Activated T-helper 1 cell treated with anti-CD3 and anti-CD28 coated beads, Interleukin-12 subunit alpha, Interleukin-12 subunit beta, Interleukin-2, Interleukin-4 antibody, amounts not matched to agents 30 ng/mL and 10 ng/mL and 1 ng/mL, durations not matched to agents 14 hours and 24 hours and 36 hours (primary cell): ENCODE measurements at regions of chr2 and their contacts with region 1.

Region 1: DNA sequence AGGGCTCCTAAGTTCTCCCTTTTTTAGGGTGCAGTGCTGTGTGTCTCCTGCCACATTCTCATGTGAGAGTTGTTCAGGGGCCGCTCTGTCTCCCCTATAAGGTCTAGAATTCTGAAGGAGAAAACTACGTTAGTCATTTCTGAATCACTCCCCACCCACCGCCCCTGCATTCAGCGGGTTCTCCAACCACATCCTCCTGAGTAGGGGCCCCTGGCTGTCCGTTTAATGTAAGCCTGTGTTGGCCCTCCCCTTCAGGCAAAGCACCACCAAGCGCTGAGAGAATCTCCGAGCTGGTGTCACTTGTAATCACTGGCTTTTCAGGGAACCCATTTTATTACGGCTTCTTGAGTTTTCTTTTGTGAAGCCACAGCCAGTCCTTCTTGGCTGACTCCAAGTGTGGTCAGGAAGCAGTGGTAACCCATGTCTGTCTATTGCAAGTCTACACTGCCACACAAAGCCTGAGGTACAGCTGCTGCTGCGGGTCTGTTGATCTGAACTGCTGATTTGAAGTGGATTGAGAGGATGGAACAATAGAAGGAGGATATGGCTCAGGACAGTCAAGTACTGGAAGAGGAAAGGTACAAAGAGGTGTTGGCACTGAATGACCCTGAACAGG is 16.9 kb downstream of the LCT start:
- DNase-seq: peak; percentile 75
- H3K4me3 Mint-ChIP-seq: peak overlapping the region; percentile 80
- H3K27ac Mint-ChIP-seq: peak overlapping the region; percentile 89
- H3K4me1 Mint-ChIP-seq: peaks cover 52% of the 10 kb centered on the region
- H3K27me3 Mint-ChIP-seq: no peaks in the 10 kb centered on the region

Region 2: GRCh38 chr2:135741395-135742324 is 78.5 kb before region 1 on chr2 and contains the start of gene UBXN4:
- intact Hi-C with region 1: loop called (anchors 1 kb)
- DNase-seq: peak; percentile 89
- H3K4me3 Mint-ChIP-seq: peak within 1 kb of the TSS; percentile 99
- H3K27ac Mint-ChIP-seq: peak within 1 kb of the TSS; percentile 100
- H3K4me1 Mint-ChIP-seq: peaks cover 36% of the 10 kb centered on the region
- H3K27me3 Mint-ChIP-seq: no peaks in the 10 kb centered on the region
- total RNA-seq, gene UBXN4: 115 and 121 TPM in 2 replicates

Region 3: DNA sequence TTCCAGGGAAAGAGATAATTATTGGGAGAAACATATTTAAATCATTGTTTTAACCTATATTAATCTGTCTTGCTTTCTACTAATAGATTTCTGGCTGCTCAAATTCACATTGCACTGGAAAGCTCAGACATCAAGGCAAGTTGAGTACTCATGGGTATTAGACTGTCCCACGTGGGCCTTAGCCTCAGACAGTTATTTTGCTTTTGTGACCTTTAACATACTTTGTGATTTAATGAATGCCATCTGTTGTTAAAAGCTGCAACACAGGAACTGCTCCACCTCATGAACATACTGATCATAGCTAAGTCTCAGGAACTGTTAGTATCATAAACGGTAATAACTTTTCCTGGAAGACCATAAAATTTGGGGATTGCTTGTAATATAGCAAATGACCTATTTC is 19.6 kb after region 1 on chr2:
- intact Hi-C with region 1: loop called (anchors 2 kb)
- DNase-seq: no peak
- H3K4me3 Mint-ChIP-seq: no peak overlapping the region
- H3K27ac Mint-ChIP-seq: no peak overlapping the region
- H3K4me1 Mint-ChIP-seq: peaks cover 32% of the 10 kb centered on the region
- H3K27me3 Mint-ChIP-seq: no peaks in the 10 kb centered on the region

Region 4: GRCh38 chr2:135876066-135876711 is 56.1 kb after region 1 on chr2 and contains the start of gene MCM6:
- intact Hi-C with region 1: loop called (anchors 1 kb)
- DNase-seq: peak; percentile 99
- H3K4me3 Mint-ChIP-seq: peak within 1 kb of the TSS; percentile 98
- H3K27ac Mint-ChIP-seq: peak within 1 kb of the TSS; percentile 99
- H3K4me1 Mint-ChIP-seq: peaks cover 45% of the 10 kb centered on the region
- H3K27me3 Mint-ChIP-seq: peaks cover 2% of the 10 kb centered on the region
- total RNA-seq, gene MCM6: 176 and 177 TPM in 2 replicates

Region 5: GRCh38 chr2:136310797-136311603 is 490.9 kb after region 1 on chr2:
- intact Hi-C with region 1: loop called (anchors 1 kb)
- DNase-seq: no peak
- H3K4me3 Mint-ChIP-seq: peak overlapping the region; percentile 38
- H3K27ac Mint-ChIP-seq: peak overlapping the region; percentile 83
- H3K4me1 Mint-ChIP-seq: peaks cover 38% of the 10 kb centered on the region
- H3K27me3 Mint-ChIP-seq: peaks cover 4% of the 10 kb centered on the region